OCI-LY7 (cell line): ENCODE measurements at regions of chr2 and their contacts with region 1.

Region 1: DNA sequence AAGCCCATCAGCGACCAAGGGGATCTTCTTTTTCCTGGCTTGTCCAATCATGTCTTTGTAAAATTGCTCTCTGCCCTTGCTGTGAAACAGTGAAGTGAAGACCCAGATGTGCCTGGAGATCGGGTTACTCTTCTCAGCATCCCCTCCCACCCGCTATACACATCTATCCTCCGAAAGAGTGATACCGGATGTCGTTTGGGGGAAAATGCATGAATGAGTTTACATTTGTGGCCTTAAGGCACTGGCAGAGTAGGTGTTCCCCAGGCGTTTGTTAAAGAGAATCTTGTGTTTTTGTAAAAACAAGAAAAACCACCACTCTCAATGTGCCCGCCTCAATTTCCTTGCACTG is 528.3 kb downstream of the CMPK2 start:
- DNase-seq: peak; percentile 86
- H3K4me3 ChIP-seq: peak overlapping the region; percentile 70
- H3K27ac ChIP-seq: peak overlapping the region; percentile 98
- H3K4me1 ChIP-seq: peaks cover 63% of the 10 kb centered on the region
- CTCF ChIP-seq: no peak

Region 2: DNA sequence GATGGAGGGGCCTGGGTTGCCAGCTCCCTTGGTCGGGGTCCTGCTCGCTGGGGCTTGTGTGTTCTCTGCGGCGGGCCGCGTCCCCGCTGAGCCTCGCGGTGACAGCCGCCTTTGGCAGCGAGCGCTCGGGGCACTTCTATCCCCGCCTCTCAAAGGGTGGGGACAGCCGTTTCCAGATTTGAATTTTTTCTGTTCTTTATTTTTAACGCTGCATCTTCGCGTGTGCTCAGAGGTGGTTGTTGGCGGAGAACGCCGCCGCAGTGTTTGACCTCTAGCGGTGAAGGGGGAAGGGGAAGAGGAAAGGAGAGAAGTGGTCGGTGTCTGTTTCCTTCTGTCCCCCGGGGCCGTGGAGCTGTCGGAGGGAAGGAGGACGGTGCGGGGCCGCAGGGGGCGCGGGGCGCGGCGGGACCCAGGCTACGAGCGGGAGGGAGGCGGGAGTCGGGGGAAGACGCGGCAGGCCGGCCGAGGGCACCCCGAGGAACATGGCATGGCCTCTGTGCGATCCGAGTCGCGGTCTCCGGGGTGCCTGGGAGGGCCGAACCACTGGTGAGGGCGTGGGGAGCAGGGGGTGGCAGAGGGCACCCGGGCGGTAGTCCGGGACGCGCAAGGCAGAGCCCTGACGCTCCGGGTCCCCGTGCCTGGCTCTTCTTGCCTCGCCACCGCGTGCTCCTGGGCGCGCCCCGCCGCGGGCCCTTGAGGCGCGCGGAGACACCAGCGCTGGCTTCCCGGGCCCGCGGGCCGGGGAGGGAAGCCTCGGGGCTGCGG is 641.3 kb before region 1 on chr2:
- CTCF ChIA-PET with region 1: no interaction called
- POLR2A ChIA-PET with region 1: interaction called, 29 read pairs
- intact Hi-C with region 1: loop called (anchors 2 kb)
- DNase-seq: peak; percentile 91
- H3K4me3 ChIP-seq: peak overlapping the region; percentile 74
- H3K27ac ChIP-seq: peak overlapping the region; percentile 94
- H3K4me1 ChIP-seq: peaks cover 39% of the 10 kb centered on the region
- CTCF ChIP-seq: peak; percentile 32; the same call in 1 of the 2 replicates

Region 3: GRCh38 chr2:6310256-6311215 is 26.9 kb before region 1 on chr2:
- CTCF ChIA-PET with region 1: interaction called, 8 read pairs
- POLR2A ChIA-PET with region 1: interaction called, 285 read pairs
- intact Hi-C with region 1: loop called (anchors 1 kb)
- DNase-seq: peak; percentile 72
- H3K4me3 ChIP-seq: peak overlapping the region; percentile 59
- H3K27ac ChIP-seq: peak overlapping the region; percentile 99
- H3K4me1 ChIP-seq: peaks cover 75% of the 10 kb centered on the region
- CTCF ChIP-seq: no peak

Region 4: GRCh38 chr2:6352906-6353515 is 15.6 kb after region 1 on chr2:
- CTCF ChIA-PET with region 1: interaction called, 4 read pairs
- POLR2A ChIA-PET with region 1: interaction called, 95 read pairs
- intact Hi-C with region 1: no loop called
- DNase-seq: peak; percentile 18
- H3K4me3 ChIP-seq: peak overlapping the region; percentile 28
- H3K27ac ChIP-seq: peak overlapping the region; percentile 90
- H3K4me1 ChIP-seq: peaks cover 91% of the 10 kb centered on the region
- CTCF ChIP-seq: peak; percentile 50; the same call in 1 of the 2 replicates

Region 5: DNA sequence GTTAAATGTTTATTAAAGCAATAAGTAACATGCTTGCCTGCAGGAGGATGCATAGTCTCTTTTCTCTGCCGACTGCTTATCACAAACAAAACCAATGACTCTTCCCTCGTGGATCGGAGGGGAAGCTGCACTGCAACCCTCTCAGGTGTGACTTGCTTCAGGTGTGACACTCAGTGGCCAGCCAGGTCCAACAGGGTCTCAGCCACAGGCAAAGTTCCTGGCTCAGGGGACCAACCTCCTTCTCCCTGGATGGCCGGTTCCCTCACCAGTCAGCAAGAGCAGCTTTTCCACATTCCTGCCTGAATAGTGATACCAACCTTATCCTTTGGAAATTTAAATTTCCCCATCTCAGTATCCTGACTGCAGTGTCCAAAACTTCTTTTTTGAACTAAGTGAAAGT is 144.8 kb after region 1 on chr2:
- CTCF ChIA-PET with region 1: no interaction called
- POLR2A ChIA-PET with region 1: no interaction called
- intact Hi-C with region 1: no loop called
- DNase-seq: no peak
- H3K4me3 ChIP-seq: no peak overlapping the region
- H3K27ac ChIP-seq: no peak overlapping the region
- H3K4me1 ChIP-seq: no peaks in the 10 kb centered on the region
- CTCF ChIP-seq: no peak

Region 6: DNA sequence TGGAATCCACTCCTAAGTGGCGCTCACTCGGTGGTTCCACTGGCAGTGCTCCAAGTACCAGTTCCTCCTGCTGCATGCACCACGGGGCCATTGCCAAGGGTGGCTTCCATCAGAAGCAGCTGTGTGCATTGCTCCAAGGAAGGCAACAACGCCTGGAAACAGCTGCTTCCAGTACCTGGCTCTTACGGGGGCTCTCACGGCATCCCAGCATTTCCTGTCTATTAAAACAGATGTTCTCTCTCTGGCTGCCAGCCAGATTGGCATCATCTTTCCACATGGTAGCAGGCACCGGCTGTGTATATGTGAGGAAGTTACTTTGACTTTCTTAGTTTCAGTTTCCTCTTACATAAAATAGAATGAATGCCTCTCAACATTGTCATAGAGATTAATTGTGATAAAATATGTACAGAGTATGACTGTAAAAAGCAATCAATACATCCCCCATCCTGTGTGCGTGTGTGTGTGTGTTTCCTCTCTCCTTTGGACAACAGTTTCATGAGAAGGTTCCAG is 443.4 kb after region 1 on chr2:
- CTCF ChIA-PET with region 1: no interaction called
- POLR2A ChIA-PET with region 1: interaction called, 3 read pairs
- intact Hi-C with region 1: loop called (anchors 2 kb)
- DNase-seq: peak; percentile 89
- H3K4me3 ChIP-seq: peak overlapping the region; percentile 42
- H3K27ac ChIP-seq: peak overlapping the region; percentile 58
- H3K4me1 ChIP-seq: peaks cover 49% of the 10 kb centered on the region
- CTCF ChIP-seq: no peak